ENCODE measurements at regions of chr11 and their contacts with region 1.

Region 1: DNA sequence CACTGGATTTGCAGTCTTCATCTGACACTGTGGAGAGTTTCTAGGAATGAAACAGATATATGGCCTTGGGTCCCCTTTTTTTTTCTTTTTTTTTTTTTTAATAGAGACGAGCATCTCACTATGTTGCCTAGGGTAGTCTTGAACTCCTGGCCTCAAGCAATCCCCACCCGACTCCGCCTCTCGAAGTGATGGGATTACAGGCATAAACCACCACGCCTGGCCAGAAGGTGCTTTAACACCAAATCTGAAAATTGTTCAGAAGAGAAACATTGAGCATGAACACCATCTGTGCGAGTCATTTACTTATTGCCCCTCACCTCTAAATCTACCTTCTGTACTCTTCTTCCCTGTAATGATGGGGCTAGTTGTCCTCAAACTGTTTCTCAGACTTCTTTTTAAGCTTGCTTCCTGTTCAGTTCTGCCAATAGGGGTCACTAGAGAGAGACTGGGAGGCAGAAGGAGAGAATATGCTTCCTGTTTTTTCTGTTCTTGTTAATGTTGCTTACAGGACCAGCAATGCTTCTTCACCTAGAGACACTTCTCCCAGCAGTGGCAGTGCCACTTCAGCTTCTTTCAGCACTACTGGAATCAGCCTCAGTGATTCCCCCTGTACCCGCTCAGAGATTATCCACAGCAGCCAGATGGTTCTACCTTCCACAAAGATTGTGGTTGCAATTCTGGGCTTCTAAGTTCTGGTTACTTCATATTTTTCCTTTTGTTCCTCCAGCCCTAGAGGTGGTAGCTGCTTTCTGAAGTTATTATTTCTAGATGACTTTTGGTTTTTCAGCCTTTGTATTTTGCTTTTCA is 20.8 kb upstream of the ZBED5 start:
- DNase-seq: peak; percentile 23
- H3K4me3 ChIP-seq: no peak overlapping the region
- H3K27ac ChIP-seq: no peak overlapping the region
- H3K27me3 ChIP-seq: no peaks in the 10 kb centered on the region
- CTCF ChIP-seq: peak; percentile 85

Region 2: DNA sequence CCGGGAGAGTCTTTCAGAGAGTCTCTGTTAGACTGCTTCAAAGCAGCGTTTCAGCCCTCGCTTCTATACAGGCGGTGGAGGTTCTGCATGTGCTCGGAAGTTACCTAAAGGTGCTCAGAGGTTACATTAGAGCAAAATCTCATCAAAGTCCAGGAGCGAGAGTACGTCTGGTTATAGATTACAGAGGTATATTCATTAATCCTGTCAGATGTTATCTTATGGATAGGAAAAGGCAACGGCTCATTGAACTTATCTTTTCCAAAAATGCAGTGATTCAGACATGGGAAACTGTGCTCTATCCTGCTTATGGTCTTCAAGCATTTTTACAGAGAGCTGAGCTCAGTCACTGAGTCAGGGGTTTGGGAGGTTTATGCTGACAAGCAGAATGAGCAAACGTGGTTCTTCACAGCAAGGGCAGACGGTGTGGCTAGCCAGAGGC is 11.7 kb before region 1 on chr11:
- CTCF ChIA-PET with region 1: interaction called, 15 read pairs
- POLR2A ChIA-PET with region 1: no interaction called
- DNase-seq: peak; percentile 34
- H3K4me3 ChIP-seq: no peak overlapping the region
- H3K27ac ChIP-seq: no peak overlapping the region
- H3K27me3 ChIP-seq: no peaks in the 10 kb centered on the region
- CTCF ChIP-seq: no peak

Region 3: DNA sequence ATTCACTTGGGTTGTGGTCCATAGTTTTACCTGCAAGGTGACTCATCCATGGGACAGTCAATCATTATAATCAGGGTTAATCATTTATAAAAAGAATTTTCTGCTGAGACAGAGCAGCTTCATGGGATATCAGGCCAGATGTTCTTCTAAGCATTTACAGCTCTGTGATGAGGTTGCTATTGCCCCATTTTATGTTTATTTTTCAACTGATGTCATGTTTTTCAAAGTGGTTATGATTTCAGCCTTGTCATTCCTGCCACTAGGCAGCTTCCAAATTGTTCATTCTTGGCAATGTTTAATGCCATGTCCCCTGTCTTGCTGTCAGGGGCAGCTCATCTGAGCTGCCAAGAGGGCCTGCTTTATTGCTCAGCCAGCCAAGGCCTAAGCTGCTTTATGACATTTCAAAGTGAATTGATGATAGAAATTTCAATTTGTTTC is 15.1 kb after region 1 on chr11:
- CTCF ChIA-PET with region 1: interaction called, 24 read pairs
- POLR2A ChIA-PET with region 1: no interaction called
- DNase-seq: peak; percentile 62
- H3K4me3 ChIP-seq: no peak overlapping the region
- H3K27ac ChIP-seq: peak overlapping the region; percentile 72
- H3K27me3 ChIP-seq: no peaks in the 10 kb centered on the region
- CTCF ChIP-seq: peak; percentile 62

Region 4: DNA sequence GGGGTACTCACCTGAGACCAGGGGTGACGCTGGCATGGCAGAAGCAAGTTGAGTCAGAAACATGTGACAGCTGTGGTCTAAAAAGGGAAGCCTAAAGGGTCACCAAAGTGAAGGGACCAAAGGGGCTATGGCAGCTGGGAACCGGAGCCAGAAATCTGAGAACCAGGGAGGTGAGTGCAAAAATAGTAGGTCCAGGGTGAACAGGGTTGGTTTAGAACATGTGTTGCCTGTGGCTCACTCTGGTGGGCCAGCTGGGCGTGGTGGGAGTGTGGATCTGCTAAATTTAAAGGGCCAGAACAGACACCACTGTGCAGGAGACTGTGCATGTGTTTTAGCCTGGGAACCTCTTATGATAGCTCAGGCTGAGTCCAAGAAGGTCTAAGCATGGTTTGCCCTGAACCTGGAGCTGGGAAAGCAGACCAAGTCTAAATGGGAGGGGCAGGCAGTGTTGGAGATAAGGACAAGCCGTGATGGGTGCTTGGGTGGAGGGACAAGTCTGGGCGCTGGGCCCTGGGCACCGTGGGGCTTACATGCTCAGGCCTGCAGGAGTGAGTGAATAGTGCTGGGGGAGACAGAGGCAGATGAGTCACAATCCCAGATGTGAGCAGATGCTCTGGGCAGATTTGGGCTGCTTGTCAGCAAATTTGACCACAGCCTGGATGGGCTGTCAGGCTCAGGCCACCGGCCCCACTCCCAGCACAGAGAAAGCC is 20.7 kb after region 1 on chr11:
- CTCF ChIA-PET with region 1: interaction called, 24 read pairs
- POLR2A ChIA-PET with region 1: no interaction called
- DNase-seq: no peak
- H3K4me3 ChIP-seq: peak overlapping the region; percentile 45
- H3K27ac ChIP-seq: peak overlapping the region; percentile 100
- H3K27me3 ChIP-seq: no peaks in the 10 kb centered on the region
- CTCF ChIP-seq: no peak

Region 5: DNA sequence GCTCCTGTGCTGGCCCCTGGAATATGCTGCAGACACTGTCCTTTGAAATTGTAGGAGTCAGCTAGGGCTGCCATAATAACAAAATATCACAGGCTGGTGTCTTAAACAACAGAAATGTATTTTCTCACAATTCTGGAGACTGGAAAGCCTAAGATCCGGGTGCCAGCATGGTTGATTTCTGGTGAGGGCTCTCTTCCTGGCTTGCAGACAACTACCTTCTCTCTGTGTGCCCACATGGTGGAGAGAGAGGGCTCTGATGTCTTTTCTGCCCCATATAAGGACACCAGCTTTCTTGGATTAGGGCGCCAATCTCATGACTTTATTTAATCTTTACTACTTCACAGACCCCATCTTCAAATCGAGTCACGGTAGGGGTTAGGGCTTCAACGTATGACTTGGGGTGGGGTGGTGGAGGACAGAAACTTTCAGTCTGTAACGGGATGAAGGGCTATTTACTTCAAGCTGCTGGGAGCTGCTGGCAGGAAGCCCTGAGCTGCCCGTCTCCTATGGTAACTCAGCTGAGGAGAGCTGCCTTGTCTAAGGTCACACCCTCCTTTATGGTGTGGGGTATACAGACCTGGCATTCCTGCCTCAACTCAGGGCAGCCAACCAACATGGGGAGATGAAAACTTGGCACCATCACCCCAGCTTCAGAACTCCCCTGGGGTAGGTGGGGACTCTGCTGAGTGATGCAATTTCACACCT is 122.1 kb after region 1 on chr11:
- CTCF ChIA-PET with region 1: no interaction called
- POLR2A ChIA-PET with region 1: no interaction called
- DNase-seq: no peak
- H3K4me3 ChIP-seq: no peak overlapping the region
- H3K27ac ChIP-seq: no peak overlapping the region
- H3K27me3 ChIP-seq: peaks cover 28% of the 10 kb centered on the region
- CTCF ChIP-seq: no peak